Activated B cell treated with CpG ODN at 0.5 μM for 24 hours (primary cell): ENCODE measurements at regions of chr2 and their contacts with region 1.

Region 1: DNA sequence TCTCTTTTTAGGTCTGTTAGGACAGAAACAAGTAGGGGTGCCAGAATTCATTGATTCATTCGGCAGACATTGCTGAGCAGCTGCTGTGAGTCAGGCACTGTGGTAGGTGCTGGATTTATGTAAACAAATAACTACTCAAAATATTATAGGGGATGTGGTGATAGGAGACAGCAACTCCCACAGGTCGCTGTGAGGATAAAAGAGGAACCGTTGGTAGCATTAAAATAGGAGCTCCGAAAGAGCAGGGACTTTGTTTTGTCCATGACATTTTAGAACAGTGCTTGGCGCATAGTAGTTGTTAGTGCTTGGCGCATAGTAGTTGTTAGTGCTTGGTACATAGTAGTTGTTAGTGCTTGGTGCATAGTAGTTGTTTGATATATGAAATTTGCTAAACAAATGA is 29.2 kb downstream of the ATP6V1C2 start:
- DNase-seq: no peak
- ATAC-seq: no peak
- H3K4me3 Mint-ChIP-seq: no peak overlapping the region
- H3K27ac Mint-ChIP-seq: no peak overlapping the region
- H3K4me1 Mint-ChIP-seq: peaks cover 18% of the 10 kb centered on the region
- H3K27me3 Mint-ChIP-seq: no peaks in the 10 kb centered on the region
- CTCF ChIP-seq: no peak

Region 2: DNA sequence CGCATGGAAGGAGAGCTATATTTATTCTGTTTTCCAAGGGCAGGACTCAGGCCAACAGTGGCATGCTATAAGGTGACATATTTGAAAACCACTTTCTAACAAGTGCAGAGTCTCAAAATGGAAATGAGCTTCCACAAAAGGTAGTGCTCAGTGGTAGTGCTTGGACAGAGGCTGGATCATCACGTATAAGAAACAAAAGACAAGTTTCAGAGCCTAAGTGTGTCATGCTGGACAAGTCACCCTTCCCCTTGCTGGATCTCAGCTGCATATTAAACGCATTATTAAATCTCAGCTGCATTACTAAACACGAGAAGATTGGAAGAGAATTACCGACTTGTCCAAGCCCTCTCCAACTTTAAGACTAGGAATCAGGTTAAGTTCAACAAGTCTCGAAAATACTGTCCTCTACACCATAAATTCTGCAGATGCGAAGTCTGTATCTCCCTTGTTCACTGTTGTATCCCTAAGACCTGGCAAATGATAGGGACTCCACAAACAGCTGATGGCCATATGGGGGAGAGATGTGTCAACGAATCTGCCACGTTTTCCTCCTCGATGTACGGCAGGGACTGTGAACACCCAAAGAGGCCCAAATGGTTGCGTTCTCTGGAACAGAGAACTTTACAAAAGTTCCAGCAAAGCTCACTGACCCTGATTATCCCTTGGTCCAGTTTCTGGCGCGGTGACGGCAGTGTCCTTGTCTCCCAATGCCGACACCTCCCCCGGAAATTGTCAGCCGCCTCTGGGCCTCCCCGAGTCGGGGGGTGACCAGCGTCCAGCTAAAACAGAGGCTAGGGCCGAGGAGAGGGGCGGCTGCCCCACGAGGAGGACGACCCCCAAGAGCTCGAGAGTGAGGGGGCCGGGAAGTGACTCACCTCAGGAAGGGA is 61.4 kb before region 1 on chr2:
- CTCF ChIA-PET with region 1: no interaction called
- POLR2A ChIA-PET with region 1: interaction called, 7 read pairs
- intact Hi-C with region 1: loop called (anchors 1 kb)
- DNase-seq: no peak
- ATAC-seq: peak; percentile 26
- H3K4me3 Mint-ChIP-seq: no peak overlapping the region
- H3K27ac Mint-ChIP-seq: no peak overlapping the region
- H3K4me1 Mint-ChIP-seq: peaks cover 10% of the 10 kb centered on the region
- H3K27me3 Mint-ChIP-seq: no peaks in the 10 kb centered on the region
- CTCF ChIP-seq: no peak

Region 3: GRCh38 chr2:10721396-10722251 is 29.0 kb before region 1 on chr2 and contains the start of gene ATP6V1C2:
- CTCF ChIA-PET with region 1: no interaction called
- POLR2A ChIA-PET with region 1: interaction called, 7 read pairs
- intact Hi-C with region 1: loop called (anchors 1 kb)
- DNase-seq: peak; percentile 49
- ATAC-seq: peak; percentile 76
- H3K4me3 Mint-ChIP-seq: peak within 1 kb of the TSS; percentile 82
- H3K27ac Mint-ChIP-seq: no peak within 1 kb of the TSS
- H3K4me1 Mint-ChIP-seq: peaks cover 18% of the 10 kb centered on the region
- H3K27me3 Mint-ChIP-seq: peaks cover 29% of the 10 kb centered on the region
- CTCF ChIP-seq: no peak
- total RNA-seq, gene ATP6V1C2: 3.3 and 3.5 TPM in 2 replicates

Region 4: GRCh38 chr2:10787176-10787968 is 36.8 kb after region 1 on chr2:
- CTCF ChIA-PET with region 1: no interaction called
- POLR2A ChIA-PET with region 1: interaction called, 3 read pairs
- intact Hi-C with region 1: loop called (anchors 5 kb)
- DNase-seq: no peak
- ATAC-seq: peak; percentile 31
- H3K4me3 Mint-ChIP-seq: no peak overlapping the region
- H3K27ac Mint-ChIP-seq: no peak overlapping the region
- H3K4me1 Mint-ChIP-seq: peaks cover 2% of the 10 kb centered on the region
- H3K27me3 Mint-ChIP-seq: no peaks in the 10 kb centered on the region
- CTCF ChIP-seq: no peak

Region 5: DNA sequence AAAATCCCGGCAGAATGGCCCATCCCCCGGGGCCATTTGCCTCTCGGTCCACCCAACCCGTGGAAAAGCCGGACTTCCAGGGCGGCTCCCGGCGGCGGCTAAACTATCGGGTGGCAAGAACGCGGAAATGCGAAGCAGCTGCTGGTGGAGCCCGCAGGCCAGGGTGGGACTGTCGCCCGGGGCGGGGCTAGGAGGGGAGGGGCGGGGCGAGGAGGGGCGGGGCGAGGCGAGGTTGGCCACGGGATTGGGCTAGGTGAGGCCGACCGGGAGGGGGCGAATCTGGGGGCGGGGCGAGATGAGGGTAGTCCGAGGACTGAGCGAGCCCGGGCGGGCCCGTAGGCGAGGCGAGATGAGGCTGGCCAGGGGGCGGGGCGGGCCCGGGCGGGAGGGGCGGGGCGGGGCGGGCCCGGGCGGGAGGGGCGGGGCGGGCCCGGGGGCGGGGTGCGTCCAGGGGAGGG is 404.3 kb after region 1 on chr2:
- CTCF ChIA-PET with region 1: no interaction called
- POLR2A ChIA-PET with region 1: no interaction called
- intact Hi-C with region 1: loop called (anchors 1 kb)
- DNase-seq: peak; percentile 91
- ATAC-seq: peak; percentile 92
- H3K4me3 Mint-ChIP-seq: peak overlapping the region; percentile 85
- H3K27ac Mint-ChIP-seq: peak overlapping the region; percentile 84
- H3K4me1 Mint-ChIP-seq: peaks cover 20% of the 10 kb centered on the region
- H3K27me3 Mint-ChIP-seq: no peaks in the 10 kb centered on the region
- CTCF ChIP-seq: no peak

Region 6: DNA sequence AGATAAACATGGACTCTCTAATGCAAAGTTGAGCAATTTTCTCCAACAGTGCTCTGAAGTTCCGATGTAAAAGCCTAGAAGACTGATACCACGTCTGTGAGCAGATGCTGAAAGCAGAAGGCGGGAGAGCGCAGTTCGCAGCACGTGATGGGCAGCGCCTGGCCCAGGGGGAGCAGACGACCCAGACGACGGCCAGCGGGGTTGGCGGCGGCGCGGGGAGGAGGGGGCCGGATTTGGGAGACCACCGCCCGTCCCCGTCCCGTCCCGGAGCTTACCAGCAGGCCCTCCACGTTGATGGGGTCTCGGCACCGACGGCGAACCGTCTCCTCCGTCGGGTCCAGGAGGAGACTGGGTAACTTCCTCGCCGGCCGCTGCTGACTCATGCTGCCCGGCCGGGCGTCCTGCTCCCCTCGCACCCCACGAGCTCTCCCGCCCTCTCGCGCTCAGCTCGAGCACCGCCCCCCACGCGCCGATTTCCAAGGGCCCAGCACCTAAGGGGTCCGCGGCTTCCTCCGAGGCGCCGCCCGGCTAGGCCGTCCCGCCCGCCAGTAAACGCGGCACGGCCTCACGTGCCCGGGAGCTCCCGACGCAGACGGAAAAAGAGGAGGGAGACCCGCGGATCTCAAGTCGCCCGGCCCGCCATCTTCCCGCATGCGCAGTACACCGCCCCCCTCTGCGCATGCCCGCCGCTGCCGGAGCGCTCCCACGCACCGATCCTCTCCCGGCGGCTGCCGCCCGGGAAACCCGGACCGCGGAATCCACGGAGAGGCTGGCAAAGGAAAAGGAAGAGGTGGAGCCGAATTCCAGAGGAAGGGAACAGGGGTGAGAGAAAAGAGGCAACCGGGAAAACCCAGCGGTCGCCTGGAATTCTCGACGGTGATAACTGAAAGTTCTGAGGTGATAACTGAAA is 715.1 kb after region 1 on chr2 and contains the start of gene E2F6:
- CTCF ChIA-PET with region 1: no interaction called
- POLR2A ChIA-PET with region 1: interaction called, 5 read pairs
- intact Hi-C with region 1: loop called (anchors 1 kb)
- DNase-seq: peak; percentile 93
- ATAC-seq: peak; percentile 81
- H3K4me3 Mint-ChIP-seq: peak within 1 kb of the TSS; percentile 98
- H3K27ac Mint-ChIP-seq: peak within 1 kb of the TSS; percentile 89
- H3K4me1 Mint-ChIP-seq: peaks cover 31% of the 10 kb centered on the region
- H3K27me3 Mint-ChIP-seq: no peaks in the 10 kb centered on the region
- CTCF ChIP-seq: no peak
- total RNA-seq, gene E2F6: 11.8 and 12.4 TPM in 2 replicates

Region 7: DNA sequence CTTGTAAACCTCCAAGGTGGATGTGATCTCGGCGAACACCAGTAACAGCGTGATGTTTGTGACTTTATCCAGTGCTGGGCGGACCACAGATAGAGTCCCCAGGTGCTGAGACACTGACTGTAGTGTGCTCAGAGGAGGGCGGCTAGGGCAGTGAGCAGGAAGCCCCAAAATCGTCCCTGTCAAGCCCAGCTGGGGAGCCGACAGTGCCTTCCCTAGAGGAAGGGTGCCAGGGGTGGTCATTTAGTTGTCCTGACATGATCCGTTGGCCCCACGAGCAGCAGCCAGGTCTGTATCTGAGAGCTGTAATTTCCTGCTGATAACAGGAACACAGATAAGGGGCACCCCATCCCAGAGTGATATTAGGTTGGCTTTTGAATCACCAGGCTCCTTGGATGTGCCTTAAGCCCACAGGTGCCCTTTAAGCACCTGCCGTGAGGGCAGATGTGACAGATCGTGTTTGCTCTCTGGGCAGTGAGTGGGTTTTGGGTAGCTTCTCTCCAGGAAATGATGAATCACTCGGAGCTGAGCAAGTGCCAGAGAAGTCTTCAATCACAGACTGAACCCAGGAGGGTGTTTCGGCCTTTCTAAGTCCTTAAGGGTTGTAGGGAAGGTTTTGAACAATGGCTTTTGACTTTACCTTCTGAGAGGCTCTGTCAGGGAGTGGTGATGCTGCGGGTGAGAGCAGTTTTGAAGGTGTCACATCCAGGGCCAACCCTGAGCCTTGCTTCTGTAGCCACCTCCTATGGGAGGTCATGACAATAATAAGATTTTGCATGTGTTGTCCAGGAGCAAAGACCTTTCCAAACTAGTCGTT is 1003.5 kb after region 1 on chr2:
- CTCF ChIA-PET with region 1: no interaction called
- POLR2A ChIA-PET with region 1: no interaction called
- intact Hi-C with region 1: loop called (anchors 2 kb)
- DNase-seq: peak; percentile 43
- ATAC-seq: peak; percentile 54
- H3K4me3 Mint-ChIP-seq: peak overlapping the region; percentile 82
- H3K27ac Mint-ChIP-seq: peak overlapping the region; percentile 96
- H3K4me1 Mint-ChIP-seq: peaks cover 90% of the 10 kb centered on the region
- H3K27me3 Mint-ChIP-seq: no peaks in the 10 kb centered on the region
- CTCF ChIP-seq: no peak